Activated CD4-positive, alpha-beta memory T cell treated with anti-CD3 and anti-CD28 coated beads, Interleukin-2, amount 10 ng/mL, durations not matched to agents 7 days and 5 days (primary cell): ENCODE measurements at regions of chr1 and their contacts with region 1.

Region 1: DNA sequence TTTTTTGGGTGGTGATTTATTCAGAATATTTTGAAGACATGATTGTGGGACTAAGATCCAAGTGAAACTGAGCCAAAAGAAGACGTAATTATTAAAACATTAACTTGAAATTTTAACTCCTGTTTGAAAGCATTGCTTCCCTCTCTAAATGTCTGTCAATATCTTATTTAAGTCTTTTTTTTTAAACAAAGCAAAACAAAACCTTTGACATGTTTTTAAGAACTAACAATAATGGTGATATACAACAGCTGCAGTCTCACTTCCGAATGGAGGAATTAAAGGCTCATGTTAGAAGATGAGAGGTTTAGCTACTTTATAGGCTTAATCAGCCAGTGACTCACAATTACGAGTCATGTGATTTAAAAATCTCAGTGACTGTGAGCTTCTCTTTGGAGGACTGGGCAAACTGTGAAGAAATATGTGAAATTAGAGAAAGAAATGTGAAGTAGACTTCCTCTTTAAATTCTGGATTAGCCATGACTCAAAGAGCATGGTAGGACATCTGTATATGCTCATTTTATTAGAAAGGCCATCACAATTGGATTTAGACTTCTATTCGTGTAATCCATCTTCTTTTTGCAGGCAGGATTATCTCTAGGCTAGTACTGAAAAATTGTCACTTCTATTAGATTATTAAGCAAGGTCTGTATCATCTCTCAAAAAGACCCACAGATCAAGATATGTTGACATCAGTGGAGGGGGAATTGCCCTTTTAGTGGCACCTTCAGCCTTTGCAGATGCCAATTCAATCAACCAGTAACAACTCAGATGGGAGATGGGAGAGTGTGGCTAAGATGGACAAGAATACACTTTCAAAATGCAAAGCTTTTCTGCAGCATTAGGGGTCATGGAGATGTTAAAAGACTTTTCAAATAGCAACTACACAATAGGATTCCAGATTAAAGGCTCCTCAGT is 28.7 kb downstream of the KCNA3 start:
- DNase-seq: no peak
- H3K4me3 Mint-ChIP-seq: peak overlapping the region; percentile 1
- H3K27ac Mint-ChIP-seq: no peak overlapping the region
- H3K4me1 Mint-ChIP-seq: peaks cover 47% of the 10 kb centered on the region
- H3K27me3 Mint-ChIP-seq: no peaks in the 10 kb centered on the region

Region 2: GRCh38 chr1:110612065-110612751 is 33.9 kb before region 1 on chr1:
- CTCF ChIA-PET with region 1: no interaction called
- POLR2A ChIA-PET with region 1: no interaction called
- DNase-seq: peak; percentile 11
- H3K4me3 Mint-ChIP-seq: no peak overlapping the region
- H3K27ac Mint-ChIP-seq: no peak overlapping the region
- H3K4me1 Mint-ChIP-seq: peaks cover 58% of the 10 kb centered on the region
- H3K27me3 Mint-ChIP-seq: peaks cover 22% of the 10 kb centered on the region

Region 3: DNA sequence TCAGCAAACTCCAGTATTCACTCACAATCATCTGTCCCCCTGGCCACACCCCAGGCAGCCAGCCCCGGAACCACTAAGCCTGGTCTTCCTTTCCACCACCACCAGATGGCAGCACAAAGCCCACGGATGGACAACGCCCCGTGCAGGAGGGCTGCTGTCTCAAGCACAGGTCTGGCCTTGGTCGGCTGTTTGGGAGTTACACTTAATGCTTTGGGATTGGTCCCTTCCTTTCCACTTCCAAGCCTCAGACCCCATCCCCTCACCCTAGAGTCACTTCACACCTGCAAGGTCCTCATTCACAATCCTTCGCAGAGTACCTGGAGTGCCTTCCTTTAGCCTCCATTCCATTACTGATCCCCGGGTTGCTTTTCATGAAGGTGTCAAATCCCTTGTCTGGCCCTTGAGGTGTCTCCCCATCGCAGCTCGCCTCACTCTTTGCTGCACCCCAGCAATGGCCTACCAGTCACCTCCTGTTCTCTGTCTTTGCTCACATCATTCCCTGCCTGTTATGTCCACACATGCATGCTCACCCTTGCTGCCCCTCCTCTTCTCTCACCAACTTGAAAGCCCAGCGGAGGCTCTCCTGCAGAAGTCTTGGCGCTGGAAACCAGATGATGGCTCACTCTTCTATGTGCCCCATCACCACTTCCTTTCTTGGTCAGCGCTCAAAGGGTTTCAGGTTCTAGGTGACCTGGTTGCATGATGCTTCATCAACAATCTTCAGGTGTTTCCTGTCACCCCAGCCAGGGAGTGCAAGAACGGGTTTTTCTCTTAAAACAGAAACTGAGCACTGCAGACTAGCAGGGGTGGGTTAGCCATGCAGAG is 15.0 kb before region 1 on chr1:
- CTCF ChIA-PET with region 1: interaction called, 73 read pairs
- POLR2A ChIA-PET with region 1: interaction called, 326 read pairs
- DNase-seq: peak; percentile 92
- H3K4me3 Mint-ChIP-seq: no peak overlapping the region
- H3K27ac Mint-ChIP-seq: no peak overlapping the region
- H3K4me1 Mint-ChIP-seq: peaks cover 68% of the 10 kb centered on the region
- H3K27me3 Mint-ChIP-seq: no peaks in the 10 kb centered on the region

Region 4: GRCh38 chr1:110657351-110657750 is 11.3 kb after region 1 on chr1:
- CTCF ChIA-PET with region 1: interaction called, 5 read pairs
- POLR2A ChIA-PET with region 1: interaction called, 326 read pairs
- DNase-seq: no peak
- H3K4me3 Mint-ChIP-seq: no peak overlapping the region
- H3K27ac Mint-ChIP-seq: no peak overlapping the region
- H3K4me1 Mint-ChIP-seq: peaks cover 44% of the 10 kb centered on the region
- H3K27me3 Mint-ChIP-seq: no peaks in the 10 kb centered on the region

Region 5: DNA sequence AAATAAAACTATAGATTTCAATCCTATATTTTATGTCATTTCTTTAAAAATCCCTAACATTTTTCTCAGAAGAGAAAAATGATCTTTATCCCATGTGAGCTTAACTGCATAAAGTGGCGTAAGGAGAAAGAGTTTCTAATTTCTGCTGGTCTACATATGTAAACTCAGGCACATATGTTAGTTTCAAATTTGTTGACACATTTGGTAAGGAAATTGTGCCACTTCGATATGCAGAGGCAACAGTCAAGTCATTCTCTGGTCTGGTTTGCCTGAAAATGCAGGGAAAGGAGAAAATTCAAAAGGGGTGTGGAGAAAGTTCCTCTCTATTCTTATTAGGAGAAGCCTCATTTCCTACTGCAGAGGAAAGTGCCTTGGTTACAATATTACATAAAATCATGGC is 17.2 kb after region 1 on chr1:
- CTCF ChIA-PET with region 1: interaction called, 8 read pairs
- POLR2A ChIA-PET with region 1: interaction called, 94 read pairs
- DNase-seq: no peak
- H3K4me3 Mint-ChIP-seq: no peak overlapping the region
- H3K27ac Mint-ChIP-seq: no peak overlapping the region
- H3K4me1 Mint-ChIP-seq: peaks cover 29% of the 10 kb centered on the region
- H3K27me3 Mint-ChIP-seq: no peaks in the 10 kb centered on the region

Region 6: GRCh38 chr1:110668549-110668948 is 22.5 kb after region 1 on chr1:
- CTCF ChIA-PET with region 1: interaction called, 16 read pairs
- POLR2A ChIA-PET with region 1: interaction called, 157 read pairs
- DNase-seq: peak; percentile 25
- H3K4me3 Mint-ChIP-seq: peak overlapping the region; percentile 73
- H3K27ac Mint-ChIP-seq: peak overlapping the region; percentile 79
- H3K4me1 Mint-ChIP-seq: peaks cover 12% of the 10 kb centered on the region
- H3K27me3 Mint-ChIP-seq: no peaks in the 10 kb centered on the region

Region 7: DNA sequence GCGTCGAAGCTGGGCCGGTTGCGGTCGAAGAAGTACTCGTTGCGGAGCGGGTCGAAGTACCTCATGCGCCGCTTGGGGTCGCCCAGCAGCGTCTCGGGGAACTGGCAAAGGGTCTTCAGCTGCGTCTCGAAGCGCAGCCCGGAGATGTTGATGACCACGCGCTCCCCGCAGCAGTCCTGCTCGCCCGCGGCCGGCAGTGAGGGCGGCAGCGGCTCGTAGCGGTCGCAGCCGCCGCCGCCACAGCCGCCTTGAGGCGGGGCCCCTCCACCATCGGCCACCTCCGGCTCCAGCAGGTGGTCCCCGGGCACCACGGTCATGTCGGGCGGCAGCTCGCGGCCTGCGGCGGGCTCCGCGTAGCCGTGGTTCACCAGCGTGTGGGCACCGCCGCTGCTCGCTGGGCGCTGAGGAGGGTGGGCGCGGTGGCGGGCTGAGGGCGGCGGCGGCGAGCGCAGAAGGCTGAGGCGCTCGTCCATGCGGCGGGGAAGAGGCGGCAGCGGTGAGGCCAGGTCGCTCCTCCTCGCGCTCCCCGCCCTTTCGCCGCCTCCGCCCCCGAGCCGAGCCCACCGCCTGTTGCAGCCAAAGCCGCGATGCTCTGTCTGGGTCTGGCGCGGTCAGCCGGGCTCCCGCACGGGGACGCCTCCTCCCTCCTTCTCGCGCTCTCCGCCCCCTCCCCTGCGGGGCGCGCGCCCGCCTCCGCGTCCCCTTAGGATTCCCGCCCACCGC is 28.4 kb after region 1 on chr1 and contains the start of gene KCNA3:
- CTCF ChIA-PET with region 1: interaction called, 16 read pairs
- POLR2A ChIA-PET with region 1: interaction called, 157 read pairs
- DNase-seq: peak; percentile 74
- H3K4me3 Mint-ChIP-seq: peak within 1 kb of the TSS; percentile 100
- H3K27ac Mint-ChIP-seq: peak within 1 kb of the TSS; percentile 89
- H3K4me1 Mint-ChIP-seq: peaks cover 28% of the 10 kb centered on the region
- H3K27me3 Mint-ChIP-seq: no peaks in the 10 kb centered on the region
- total RNA-seq, gene KCNA3: 84.9 to 86.2 TPM